WTC11 (cell line): ENCODE measurements at regions of chr17 and their contacts with region 1.

Region 1: GRCh38 chr17:72602517-72603419 is 481.9 kb downstream of the SOX9 start:
- DNase-seq: peak; percentile 48
- ATAC-seq: peak; percentile 93
- H3K4me3 Mint-ChIP-seq: peak overlapping the region; percentile 42
- H3K27ac Mint-ChIP-seq: no peak overlapping the region
- H3K4me1 Mint-ChIP-seq: peaks cover 32% of the 10 kb centered on the region
- H3K27me3 Mint-ChIP-seq: peaks cover 16% of the 10 kb centered on the region
- CTCF ChIP-seq: no peak

Region 2: DNA sequence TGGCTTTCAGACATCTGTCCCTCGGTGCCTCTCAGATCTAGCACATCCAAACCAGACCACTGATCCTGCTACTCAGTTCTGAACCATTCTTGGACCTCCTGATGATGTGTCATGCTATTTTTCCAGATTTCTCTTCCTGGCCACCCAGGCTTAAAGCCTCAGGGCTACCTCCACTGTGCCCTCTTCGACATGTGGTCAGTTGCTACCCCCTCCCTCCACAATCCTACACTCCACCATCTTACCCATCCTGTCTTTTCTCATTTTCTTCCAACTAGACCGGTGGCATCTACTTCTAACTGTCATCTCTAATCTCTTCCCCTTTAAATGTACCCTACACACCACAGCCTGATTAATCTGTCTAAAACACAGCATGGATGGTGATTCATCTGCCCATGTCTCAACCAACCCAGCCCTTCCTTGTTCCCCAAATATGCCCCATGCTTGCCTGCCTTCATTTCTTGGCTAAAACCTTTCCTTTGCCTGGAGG is 11.1 kb after region 1 on chr17:
- CTCF ChIA-PET with region 1: interaction called, 15 read pairs
- POLR2A ChIA-PET with region 1: interaction called, 3 read pairs
- DNase-seq: no peak
- ATAC-seq: no peak
- H3K4me3 Mint-ChIP-seq: no peak overlapping the region
- H3K27ac Mint-ChIP-seq: no peak overlapping the region
- H3K4me1 Mint-ChIP-seq: peaks cover 23% of the 10 kb centered on the region
- H3K27me3 Mint-ChIP-seq: peaks cover 11% of the 10 kb centered on the region
- CTCF ChIP-seq: no peak